ENCODE measurements at regions of chr7 and their contacts with region 1.

Region 1: GRCh38 chr7:77933394-77933793 is 134.8 kb downstream of the PHTF2 start:
- DNase-seq: peak; percentile 45
- ATAC-seq: peak; percentile 78
- H3K4me3 ChIP-seq: no peak overlapping the region
- H3K27ac ChIP-seq: no peak overlapping the region
- H3K4me1 ChIP-seq: peaks cover 6% of the 10 kb centered on the region
- H3K27me3 ChIP-seq: no peaks in the 10 kb centered on the region
- CTCF ChIP-seq: no peak

Region 2: GRCh38 chr7:77651573-77652162 is 281.7 kb before region 1 on chr7:
- CTCF ChIA-PET with region 1: no interaction called
- POLR2A ChIA-PET with region 1: no interaction called
- intact Hi-C with region 1: loop called (anchors 5 kb)
- DNase-seq: peak; percentile 55
- ATAC-seq: no peak
- H3K4me3 ChIP-seq: no peak overlapping the region
- H3K27ac ChIP-seq: no peak overlapping the region
- H3K4me1 ChIP-seq: 0 out of 2 replicates have a peak, but pooled peaks cover 5% of the 10 kb centered on the region
- H3K27me3 ChIP-seq: no peaks in the 10 kb centered on the region
- CTCF ChIP-seq: peak; percentile 79

Region 3: GRCh38 chr7:77696198-77697028 is 237.0 kb before region 1 on chr7 and contains the start of gene RSBN1L:
- CTCF ChIA-PET with region 1: no interaction called
- POLR2A ChIA-PET with region 1: no interaction called
- intact Hi-C with region 1: no loop called
- DNase-seq: peak; percentile 96
- ATAC-seq: peak; percentile 95
- H3K4me3 ChIP-seq: peak within 1 kb of the TSS; percentile 86
- H3K27ac ChIP-seq: peak within 1 kb of the TSS; percentile 55
- H3K4me1 ChIP-seq: peaks cover 15% of the 10 kb centered on the region
- H3K27me3 ChIP-seq: no peaks in the 10 kb centered on the region
- CTCF ChIP-seq: 0 out of 2 replicates have a peak, but pooled peaks have one; percentile 15
- total RNA-seq, gene RSBN1L: 6.9 and 11.2 TPM in 2 replicates

Region 4: DNA sequence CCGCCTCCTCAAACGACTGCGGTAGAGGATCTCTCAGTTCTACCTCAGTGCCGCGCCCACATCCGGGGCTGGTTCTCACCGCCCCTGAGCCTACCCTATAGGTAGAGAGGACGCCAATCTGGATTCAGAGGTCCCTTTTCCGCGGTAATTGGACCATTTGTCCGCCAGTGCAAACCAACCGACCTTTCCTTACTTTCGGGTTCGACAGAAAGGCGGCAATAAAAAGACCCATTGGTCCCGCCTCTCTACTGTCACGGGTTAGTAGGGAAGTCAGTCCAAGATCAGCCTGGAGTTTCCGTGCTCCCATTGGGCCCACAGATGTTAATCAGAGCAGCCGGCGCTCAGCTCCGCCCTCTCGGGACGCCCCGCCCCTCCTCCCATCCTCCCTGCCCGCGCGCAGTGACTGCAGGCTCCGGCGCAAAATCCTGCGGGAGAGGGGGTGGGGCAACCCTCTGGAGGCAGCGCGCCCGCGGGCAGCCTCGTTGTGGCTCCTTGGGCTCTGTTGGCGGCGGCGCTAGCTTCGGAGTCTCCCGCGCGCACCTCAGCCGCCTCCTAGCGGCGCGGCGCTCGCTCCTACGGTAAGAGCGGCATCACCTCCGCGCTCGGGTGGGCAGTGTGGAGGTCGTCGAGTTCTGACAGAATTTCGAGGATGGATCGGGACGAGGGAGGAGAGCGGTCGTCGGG is 134.9 kb before region 1 on chr7 and contains the starts of genes PHTF2 and TMEM60:
- CTCF ChIA-PET with region 1: no interaction called
- POLR2A ChIA-PET with region 1: no interaction called
- intact Hi-C with region 1: loop called (anchors 2 kb)
- DNase-seq: peak; percentile 99
- ATAC-seq: peak; percentile 90
- H3K4me3 ChIP-seq: peak within 1 kb of the TSS; percentile 86
- H3K27ac ChIP-seq: peak within 1 kb of the TSS; percentile 53
- H3K4me1 ChIP-seq: peaks cover 19% of the 10 kb centered on the region
- H3K27me3 ChIP-seq: no peaks in the 10 kb centered on the region
- CTCF ChIP-seq: peak; percentile 54
- total RNA-seq, gene PHTF2: 13.9 and 20.4 TPM in 2 replicates
- total RNA-seq, gene TMEM60: 6.9 and 8.1 TPM in 2 replicates

Region 5: DNA sequence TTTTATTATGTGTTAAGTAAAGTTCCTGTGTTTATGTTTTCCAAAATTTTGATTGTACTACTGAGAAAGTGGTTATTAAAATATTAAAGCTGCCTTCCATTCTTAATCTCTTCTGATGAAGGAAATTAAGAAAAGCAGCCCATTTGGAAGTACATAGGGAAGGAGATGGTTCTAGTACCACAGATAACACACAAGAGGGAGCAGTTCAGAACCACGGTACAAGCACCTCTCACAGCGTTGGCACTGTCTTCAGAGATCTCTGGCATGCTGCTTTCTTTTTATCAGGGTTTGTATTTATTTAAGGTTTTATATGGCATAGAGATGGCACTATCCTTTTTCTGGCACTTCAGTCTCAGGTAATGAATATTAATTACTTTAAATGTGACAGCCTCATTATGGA is 23.3 kb before region 1 on chr7:
- CTCF ChIA-PET with region 1: no interaction called
- POLR2A ChIA-PET with region 1: no interaction called
- intact Hi-C with region 1: no loop called
- DNase-seq: no peak
- ATAC-seq: peak; percentile 71
- H3K4me3 ChIP-seq: no peak overlapping the region
- H3K27ac ChIP-seq: no peak overlapping the region
- H3K4me1 ChIP-seq: no peaks in the 10 kb centered on the region
- H3K27me3 ChIP-seq: no peaks in the 10 kb centered on the region
- CTCF ChIP-seq: no peak; the same call in 1 of the 2 replicates